ENCODE measurements at regions of chr3 and their contacts with region 1.

Region 1: GRCh38 chr3:184513276-184514170 is 48.1 kb upstream of the EPHB3 start:
- DNase-seq: peak; percentile 80
- H3K4me3 ChIP-seq: peak overlapping the region; percentile 11 to 30
- H3K27ac ChIP-seq: no peak overlapping the region
- H3K4me1 ChIP-seq: no peaks in the 10 kb centered on the region
- H3K27me3 ChIP-seq: no peaks in the 10 kb centered on the region
- CTCF ChIP-seq: peak; percentile 28 to 87 (median 74)
- POLR2A ChIP-seq: no peak

Region 2: GRCh38 chr3:184379358-184380188 is 133.9 kb before region 1 on chr3 and contains the start of gene CHRD:
- intact Hi-C with region 1: loop called (anchors 5 kb)
- DNase-seq: no peak
- H3K4me3 ChIP-seq: peak within 1 kb of the TSS; percentile 44 to 49
- H3K27ac ChIP-seq: peak within 1 kb of the TSS; percentile 44 to 51
- H3K4me1 ChIP-seq: no peaks in the 10 kb centered on the region
- H3K27me3 ChIP-seq: no peaks in the 10 kb centered on the region
- CTCF ChIP-seq: no peak
- POLR2A ChIP-seq: no peak
- total RNA-seq, gene CHRD: 2.5 to 8.0 TPM

Region 3: GRCh38 chr3:184423561-184423960 is 90.0 kb before region 1 on chr3:
- intact Hi-C with region 1: loop called (anchors 5 kb)
- DNase-seq: no peak
- H3K4me3 ChIP-seq: no peak overlapping the region
- H3K27ac ChIP-seq: no peak overlapping the region
- H3K4me1 ChIP-seq: no peaks in the 10 kb centered on the region
- H3K27me3 ChIP-seq: no peaks in the 10 kb centered on the region
- CTCF ChIP-seq: no peak
- POLR2A ChIP-seq: no peak

Region 4: DNA sequence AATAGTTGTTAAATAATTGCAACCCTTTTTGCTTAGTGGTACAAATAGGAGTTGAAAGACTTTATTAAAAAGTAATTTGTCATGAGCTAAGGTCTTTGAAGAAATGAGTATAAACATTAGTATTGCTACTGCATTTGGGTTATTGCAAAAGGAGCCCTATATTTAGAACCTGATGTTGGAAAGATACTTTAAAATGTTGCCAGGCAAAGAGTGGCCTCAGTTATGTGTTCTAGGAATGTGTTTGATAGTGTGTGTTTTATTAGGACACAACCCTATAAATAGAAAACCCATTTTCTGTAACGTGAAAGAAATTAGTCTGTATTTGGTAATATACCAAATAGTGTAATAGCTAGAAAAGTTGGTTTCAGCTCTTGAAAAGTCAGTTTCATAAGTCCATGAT is 309.1 kb after region 1 on chr3:
- intact Hi-C with region 1: no loop called
- DNase-seq: no peak
- H3K4me3 ChIP-seq: no peak overlapping the region
- H3K27ac ChIP-seq: no peak overlapping the region
- H3K4me1 ChIP-seq: no peaks in the 10 kb centered on the region
- H3K27me3 ChIP-seq: no peaks in the 10 kb centered on the region
- CTCF ChIP-seq: no peak
- POLR2A ChIP-seq: no peak

Measured in prostate gland (tissue), 2 donors.